Heart left ventricle (tissue), 16 donors: ENCODE measurements at regions of chr3 and their contacts with region 1.

Region 1: DNA sequence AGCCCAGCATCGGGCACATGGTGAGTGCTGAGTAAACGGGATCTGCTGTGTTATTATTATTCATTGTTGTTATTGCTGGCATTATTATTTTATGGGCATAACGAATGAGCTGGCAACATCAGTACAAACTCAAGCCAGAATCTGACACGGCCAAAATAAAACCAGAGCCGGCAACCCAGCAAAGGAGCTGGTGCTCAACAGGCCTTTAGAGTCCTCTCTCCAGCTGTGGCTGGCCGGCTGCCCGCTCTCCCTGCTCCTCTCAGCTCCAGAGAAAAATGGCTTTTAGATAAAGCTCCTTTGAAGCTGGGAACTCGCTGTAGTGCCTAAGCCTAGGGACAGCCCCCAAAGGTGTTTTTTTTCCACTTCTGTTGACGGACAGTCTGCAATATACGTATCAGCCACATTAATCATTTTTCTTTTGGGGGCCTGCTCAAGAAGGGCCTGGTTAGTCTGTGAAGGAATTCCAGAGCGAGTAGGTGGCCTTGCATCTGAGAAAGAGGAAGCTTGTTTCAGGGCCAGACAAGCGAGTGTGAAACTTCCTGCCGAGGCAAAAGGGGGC is 193.9 kb upstream of the UBE2E1 start:
- DNase-seq: peak; percentile 77 to 90 (median 81)
- ATAC-seq: peak; percentile 54 to 90 (median 87)
- H3K4me3 ChIP-seq: peak overlapping the region in 9 of 12 donors; percentile 14 to 45 (median 23)
- H3K27ac ChIP-seq: peak overlapping the region in 11 of 12 donors; percentile 8 to 77 (median 50)
- H3K4me1 ChIP-seq: peaks cover 0 to 20% (median 7%) of the 10 kb centered on the region in 12 donors
- H3K27me3 ChIP-seq: no peaks in the 10 kb centered on the region
- CTCF ChIP-seq: no peak
- POLR2A ChIP-seq: no peak

Region 2: GRCh38 chr3:23202921-23203707 is 408.7 kb before region 1 on chr3 and contains the start of gene UBE2E2:
- intact Hi-C with region 1: loop called in 1 of 10 experiments (anchors 10 kb)
- DNase-seq: peak in 4 of 5 donors; percentile 78 to 86 (median 83)
- ATAC-seq: peak; percentile 57 to 93 (median 85)
- H3K4me3 ChIP-seq: peak within 1 kb of the TSS; percentile 77 to 98 (median 90)
- H3K27ac ChIP-seq: peak within 1 kb of the TSS; percentile 37 to 93 (median 87)
- H3K4me1 ChIP-seq: peaks cover 0 to 34% (median 19%) of the 10 kb centered on the region in 12 donors
- H3K27me3 ChIP-seq: no peaks in the 10 kb centered on the region
- CTCF ChIP-seq: no peak
- POLR2A ChIP-seq: peak in 1 of 2 donors; percentile 64
- total RNA-seq, gene UBE2E2: 35.4 to 63.9 (median 56.3) TPM

Region 3: GRCh38 chr3:23761440-23761896 is 149.7 kb after region 1 on chr3:
- intact Hi-C with region 1: no loop called
- DNase-seq: no peak
- ATAC-seq: peak in 2 of 4 donors; percentile 44 to 54
- H3K4me3 ChIP-seq: no peak overlapping the region
- H3K27ac ChIP-seq: no peak overlapping the region
- H3K4me1 ChIP-seq: peaks cover 0 to 31% (median 3%) of the 10 kb centered on the region in 12 donors
- H3K27me3 ChIP-seq: no peaks in the 10 kb centered on the region
- CTCF ChIP-seq: peak in 6 of 12 donors; percentile 15 to 33 (median 20)
- POLR2A ChIP-seq: no peak